Testis (tissue), 5 donors: ENCODE measurements at regions of chr20 and their contacts with region 1.

Region 1: DNA sequence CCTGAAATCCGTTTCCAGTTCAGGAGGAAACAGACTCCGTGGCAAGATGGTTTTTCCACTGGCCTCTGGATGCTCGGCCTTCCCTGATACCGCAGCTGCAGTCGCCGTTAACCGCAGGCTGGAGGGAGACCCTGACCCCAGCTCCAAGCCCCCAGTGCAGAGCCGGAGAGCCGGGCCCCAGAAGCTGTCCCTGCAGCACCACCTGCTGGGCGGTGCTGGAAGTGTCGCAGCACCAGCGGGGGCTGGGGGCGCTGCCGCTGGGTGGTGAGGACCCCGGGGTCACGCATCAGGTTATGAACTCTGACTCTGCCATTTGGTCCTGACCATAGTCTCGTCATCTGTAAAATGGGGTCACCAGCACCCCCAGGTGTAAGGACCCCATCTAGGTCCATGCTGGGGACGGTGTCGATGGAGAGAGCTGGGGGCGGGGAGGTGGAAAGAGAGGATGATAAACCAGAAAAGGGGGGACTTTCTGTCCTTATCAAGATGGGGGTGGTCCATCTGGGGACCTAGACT is 20.7 kb upstream of the CHRNA4 start:
- DNase-seq: no peak
- H3K4me3 ChIP-seq: no peak overlapping the region
- H3K27ac ChIP-seq: no peak overlapping the region
- H3K4me1 ChIP-seq: peaks cover 8% of the 10 kb centered on the region
- H3K27me3 ChIP-seq: no peaks in the 10 kb centered on the region
- CTCF ChIP-seq: peak; percentile 84 to 93 (median 91)
- POLR2A ChIP-seq: no peak

Region 2: GRCh38 chr20:63106108-63106764 is 275.6 kb before region 1 on chr20:
- intact Hi-C with region 1: no loop called
- DNase-seq: no peak
- H3K4me3 ChIP-seq: no peak overlapping the region
- H3K27ac ChIP-seq: no peak overlapping the region
- H3K4me1 ChIP-seq: no peaks in the 10 kb centered on the region
- H3K27me3 ChIP-seq: no peaks in the 10 kb centered on the region
- CTCF ChIP-seq: no peak
- POLR2A ChIP-seq: no peak

Region 3: DNA sequence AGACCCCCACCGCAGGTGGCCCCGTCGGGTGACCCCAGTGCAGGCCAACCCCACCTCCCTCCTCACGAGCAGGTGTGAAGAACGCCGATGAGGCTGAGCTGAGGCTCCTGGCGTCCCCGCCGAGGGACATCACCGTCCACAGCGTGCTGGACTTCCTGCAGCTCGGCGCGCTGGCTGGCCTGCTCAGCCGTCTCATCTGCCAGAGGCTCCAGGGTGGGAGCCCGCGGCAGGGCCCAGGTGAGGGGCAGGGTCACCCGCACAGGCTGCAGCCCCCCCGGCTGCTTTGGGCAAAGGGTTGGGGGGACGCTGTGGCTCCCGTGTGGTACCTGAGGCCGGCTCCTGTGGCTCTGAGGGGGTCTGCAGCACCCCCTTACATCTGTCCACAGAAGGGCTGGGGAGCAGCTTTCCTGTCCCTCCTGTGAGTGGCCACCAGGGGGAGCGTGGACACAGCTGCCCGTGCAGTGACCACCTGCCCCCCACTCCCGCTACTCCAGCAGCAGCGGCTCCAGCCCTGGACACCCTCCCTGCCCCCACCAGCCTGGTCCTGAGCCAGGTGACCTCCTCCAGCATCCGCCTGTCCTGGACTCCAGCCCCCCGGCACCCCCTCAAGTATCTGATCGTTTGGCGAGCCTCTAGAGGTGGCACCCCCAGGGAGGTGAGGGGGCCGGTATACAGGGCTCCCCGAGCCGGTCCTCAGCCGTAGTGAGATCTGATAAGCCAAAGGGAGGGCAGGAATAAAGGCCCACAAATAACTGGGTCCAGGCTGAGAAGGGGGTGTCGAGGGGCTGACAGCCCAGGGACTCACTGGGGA is 72.4 kb before region 1 on chr20:
- intact Hi-C with region 1: loop called (anchors 5 kb)
- DNase-seq: peak; percentile 54
- H3K4me3 ChIP-seq: no peak overlapping the region
- H3K27ac ChIP-seq: no peak overlapping the region
- H3K4me1 ChIP-seq: peaks cover 6% of the 10 kb centered on the region
- H3K27me3 ChIP-seq: no peaks in the 10 kb centered on the region
- CTCF ChIP-seq: peak; percentile 69 to 91 (median 83)
- POLR2A ChIP-seq: no peak

Region 4: GRCh38 chr20:63317601-63318291 is 64.1 kb before region 1 on chr20:
- intact Hi-C with region 1: loop called (anchors 5 kb)
- DNase-seq: no peak
- H3K4me3 ChIP-seq: no peak overlapping the region
- H3K27ac ChIP-seq: no peak overlapping the region
- H3K4me1 ChIP-seq: peaks cover 12% of the 10 kb centered on the region
- H3K27me3 ChIP-seq: no peaks in the 10 kb centered on the region
- CTCF ChIP-seq: no peak
- POLR2A ChIP-seq: no peak